CD4-positive, alpha-beta T cell (primary cell): ENCODE measurements at regions of chr2 and their contacts with region 1.

Region 1: GRCh38 chr2:173027181-173028128 is 48.2 kb upstream of the MAP3K20 start:
- DNase-seq: peak; percentile 41 to 88 (median 62)
- ATAC-seq: peak; percentile 86
- H3K4me3 ChIP-seq: no peak overlapping the region
- H3K4me3 Mint-ChIP-seq: no peak overlapping the region
- H3K27ac ChIP-seq: no peak overlapping the region
- H3K27ac Mint-ChIP-seq: no peak overlapping the region
- H3K4me1 ChIP-seq: no peaks in the 10 kb centered on the region
- H3K4me1 Mint-ChIP-seq: no peaks in the 10 kb centered on the region
- H3K27me3 ChIP-seq: no peaks in the 10 kb centered on the region
- H3K27me3 Mint-ChIP-seq: peaks cover 6% of the 10 kb centered on the region
- CTCF ChIP-seq: peak; percentile 96

Region 2: DNA sequence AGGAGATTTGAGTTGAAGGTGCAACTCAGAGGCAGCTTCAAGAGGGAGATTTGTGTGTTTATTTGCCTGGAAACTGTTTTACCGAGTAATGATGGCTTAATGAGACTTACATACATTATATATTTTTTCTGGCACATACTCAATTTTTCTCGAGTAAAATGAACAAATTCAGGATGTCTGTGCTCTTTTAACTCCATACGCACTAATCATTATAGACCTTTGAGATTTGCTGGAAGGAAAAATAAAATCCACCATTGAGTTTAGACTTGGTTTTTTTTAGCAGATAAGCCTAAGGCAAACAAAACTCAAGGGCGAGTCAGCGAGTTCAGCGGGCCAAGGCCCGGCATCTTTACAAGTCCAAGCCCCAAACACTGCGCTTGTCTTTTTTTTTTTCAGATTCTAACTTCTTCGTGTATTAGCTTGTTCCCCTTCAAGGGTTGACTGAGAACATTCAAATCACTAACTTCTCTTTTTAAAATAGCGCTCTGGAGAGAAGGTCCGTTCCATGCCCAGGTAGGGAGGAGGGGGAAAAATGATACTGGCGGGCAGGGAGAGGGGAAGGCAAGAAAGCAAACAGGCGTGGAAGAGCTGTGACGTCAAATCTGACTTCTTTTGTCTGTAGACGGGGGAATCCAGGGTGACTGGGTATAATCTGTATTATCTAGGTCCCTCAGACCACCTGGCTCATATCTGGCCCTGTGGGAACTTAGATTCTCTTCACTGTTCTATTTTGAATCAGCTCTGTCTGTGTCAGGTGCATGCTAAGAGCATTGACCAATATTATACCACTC is 24.5 kb before region 1 on chr2:
- CTCF ChIA-PET with region 1: no interaction called
- POLR2A ChIA-PET with region 1: no interaction called
- intact Hi-C with region 1: no loop called
- DNase-seq: no peak
- ATAC-seq: no peak
- H3K4me3 ChIP-seq: no peak overlapping the region
- H3K4me3 Mint-ChIP-seq: no peak overlapping the region
- H3K27ac ChIP-seq: no peak overlapping the region
- H3K27ac Mint-ChIP-seq: no peak overlapping the region
- H3K4me1 ChIP-seq: no peaks in the 10 kb centered on the region
- H3K4me1 Mint-ChIP-seq: no peaks in the 10 kb centered on the region
- H3K27me3 ChIP-seq: no peaks in the 10 kb centered on the region
- H3K27me3 Mint-ChIP-seq: peaks cover 7% of the 10 kb centered on the region
- CTCF ChIP-seq: no peak

Region 3: GRCh38 chr2:173134703-173135102 is 107.2 kb after region 1 on chr2:
- CTCF ChIA-PET with region 1: no interaction called
- POLR2A ChIA-PET with region 1: no interaction called
- intact Hi-C with region 1: no loop called
- DNase-seq: peak in 2 of 14 experiments; percentile 42 to 43
- ATAC-seq: no peak
- H3K4me3 ChIP-seq: no peak overlapping the region
- H3K4me3 Mint-ChIP-seq: no peak overlapping the region
- H3K27ac ChIP-seq: no peak overlapping the region
- H3K27ac Mint-ChIP-seq: no peak overlapping the region
- H3K4me1 ChIP-seq: peaks cover 11% of the 10 kb centered on the region
- H3K4me1 Mint-ChIP-seq: peaks cover 27% of the 10 kb centered on the region
- H3K27me3 ChIP-seq: no peaks in the 10 kb centered on the region
- H3K27me3 Mint-ChIP-seq: peaks cover 19% of the 10 kb centered on the region
- CTCF ChIP-seq: no peak

Region 4: DNA sequence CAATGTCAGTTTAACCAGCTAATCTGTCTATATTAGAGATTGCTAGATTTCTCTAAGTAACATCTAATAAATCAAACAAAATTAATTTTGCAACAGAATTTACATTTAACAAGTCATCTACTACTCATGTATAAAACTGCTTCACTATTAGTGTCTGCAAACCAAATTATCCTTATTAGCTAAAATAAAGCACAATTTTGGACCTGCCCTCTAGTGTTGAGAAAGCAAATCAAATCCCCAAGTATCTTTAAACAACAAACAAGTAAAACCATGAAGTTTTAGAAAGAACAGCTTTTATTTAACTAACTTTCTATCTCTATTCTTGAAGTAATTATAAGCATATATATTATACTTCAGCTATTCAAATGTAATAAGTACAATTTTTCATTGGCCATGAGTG is 1050.8 kb after region 1 on chr2:
- CTCF ChIA-PET with region 1: no interaction called
- POLR2A ChIA-PET with region 1: no interaction called
- intact Hi-C with region 1: loop called in 1 of 2 experiments (anchors 5 kb)
- DNase-seq: peak in 1 of 14 experiments; percentile 15
- ATAC-seq: no peak
- H3K4me3 ChIP-seq: no peak overlapping the region
- H3K4me3 Mint-ChIP-seq: no peak overlapping the region
- H3K27ac ChIP-seq: no peak overlapping the region
- H3K27ac Mint-ChIP-seq: no peak overlapping the region
- H3K4me1 ChIP-seq: no peaks in the 10 kb centered on the region
- H3K4me1 Mint-ChIP-seq: no peaks in the 10 kb centered on the region
- H3K27me3 ChIP-seq: no peaks in the 10 kb centered on the region
- H3K27me3 Mint-ChIP-seq: no peaks in the 10 kb centered on the region
- CTCF ChIP-seq: peak; percentile 42